Caco-2 (cell line): ENCODE measurements at regions of chr6 and their contacts with region 1.

Region 1: GRCh38 chr6:146857180-146857979 is 258.6 kb downstream of the ADGB start:
- DNase-seq: peak; percentile 52 to 79
- H3K4me3 ChIP-seq: no peak overlapping the region
- H3K4me3 Mint-ChIP-seq: peak overlapping the region; percentile 54
- H3K27ac Mint-ChIP-seq: no peak overlapping the region
- H3K4me1 ChIP-seq: no peaks in the 10 kb centered on the region
- H3K4me1 Mint-ChIP-seq: no peaks in the 10 kb centered on the region
- H3K27me3 ChIP-seq: no peaks in the 10 kb centered on the region; the same call in 1 of the 2 replicates
- H3K27me3 Mint-ChIP-seq: peaks cover 6% of the 10 kb centered on the region
- CTCF ChIP-seq: peak; percentile 96 to 97

Region 2: GRCh38 chr6:146876271-146877151 is 19.1 kb after region 1 on chr6:
- CTCF ChIA-PET with region 1: no interaction called
- POLR2A ChIA-PET with region 1: no interaction called
- intact Hi-C with region 1: no loop called
- DNase-seq: peak; percentile 29 to 37
- H3K4me3 ChIP-seq: no peak overlapping the region
- H3K4me3 Mint-ChIP-seq: no peak overlapping the region
- H3K27ac Mint-ChIP-seq: no peak overlapping the region
- H3K4me1 ChIP-seq: 0 out of 2 replicates have a peak, but pooled peaks cover 9% of the 10 kb centered on the region
- H3K4me1 Mint-ChIP-seq: peaks cover 16% of the 10 kb centered on the region
- H3K27me3 ChIP-seq: no peaks in the 10 kb centered on the region
- H3K27me3 Mint-ChIP-seq: no peaks in the 10 kb centered on the region
- CTCF ChIP-seq: no peak

Region 3: GRCh38 chr6:147222160-147222838 is 364.9 kb after region 1 on chr6:
- CTCF ChIA-PET with region 1: no interaction called
- POLR2A ChIA-PET with region 1: no interaction called
- intact Hi-C with region 1: loop called (anchors 1 kb)
- DNase-seq: peak in 1 of 2 experiments; percentile 29
- H3K4me3 ChIP-seq: no peak overlapping the region
- H3K4me3 Mint-ChIP-seq: no peak overlapping the region
- H3K27ac Mint-ChIP-seq: no peak overlapping the region
- H3K4me1 ChIP-seq: 0 out of 2 replicates have a peak, but pooled peaks cover 5% of the 10 kb centered on the region
- H3K4me1 Mint-ChIP-seq: peaks cover 8% of the 10 kb centered on the region
- H3K27me3 ChIP-seq: no peaks in the 10 kb centered on the region
- H3K27me3 Mint-ChIP-seq: no peaks in the 10 kb centered on the region
- CTCF ChIP-seq: peak; percentile 49 to 52

Region 4: DNA sequence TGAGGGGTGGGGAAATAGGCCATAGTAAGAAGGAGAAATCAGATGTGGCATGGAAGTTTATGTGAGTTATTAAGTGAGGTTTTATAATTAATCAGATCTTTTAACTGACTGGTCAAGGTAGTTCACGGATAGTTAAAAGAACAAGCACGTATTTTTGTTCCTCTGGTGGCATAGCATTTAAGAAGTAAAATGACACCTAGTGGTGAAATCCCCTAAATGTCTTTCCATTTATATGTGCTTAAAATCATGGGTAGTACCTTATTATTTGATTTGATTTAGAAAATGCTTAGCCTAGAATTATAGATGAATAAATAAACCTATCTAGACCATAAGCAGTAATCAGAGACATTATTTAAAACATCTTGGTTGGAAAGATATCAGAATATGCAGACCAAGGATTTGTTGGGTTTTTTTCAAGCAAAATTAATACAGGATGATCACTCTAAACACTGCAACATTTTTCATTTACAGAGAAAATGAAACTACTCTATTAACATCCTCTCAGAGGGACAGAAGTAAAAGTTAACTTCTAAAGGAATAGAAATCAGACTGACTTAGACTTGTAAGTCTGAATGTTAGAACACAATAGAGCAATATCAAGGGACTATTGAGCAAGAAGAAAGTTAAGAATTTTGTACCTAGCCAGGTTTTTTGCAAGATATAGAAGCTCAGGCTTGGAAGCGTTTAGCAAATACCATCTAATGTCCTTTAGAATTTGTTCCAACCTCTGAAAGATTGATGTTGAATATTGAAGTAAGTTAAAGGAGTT is 427.9 kb after region 1 on chr6:
- CTCF ChIA-PET with region 1: no interaction called
- POLR2A ChIA-PET with region 1: no interaction called
- intact Hi-C with region 1: loop called (anchors 1 kb)
- DNase-seq: no peak
- H3K4me3 ChIP-seq: no peak overlapping the region
- H3K4me3 Mint-ChIP-seq: no peak overlapping the region
- H3K27ac Mint-ChIP-seq: no peak overlapping the region
- H3K4me1 ChIP-seq: peaks cover 6% of the 10 kb centered on the region
- H3K4me1 Mint-ChIP-seq: peaks cover 6% of the 10 kb centered on the region
- H3K27me3 ChIP-seq: no peaks in the 10 kb centered on the region
- H3K27me3 Mint-ChIP-seq: no peaks in the 10 kb centered on the region
- CTCF ChIP-seq: peak; percentile 24 to 38

Region 5: DNA sequence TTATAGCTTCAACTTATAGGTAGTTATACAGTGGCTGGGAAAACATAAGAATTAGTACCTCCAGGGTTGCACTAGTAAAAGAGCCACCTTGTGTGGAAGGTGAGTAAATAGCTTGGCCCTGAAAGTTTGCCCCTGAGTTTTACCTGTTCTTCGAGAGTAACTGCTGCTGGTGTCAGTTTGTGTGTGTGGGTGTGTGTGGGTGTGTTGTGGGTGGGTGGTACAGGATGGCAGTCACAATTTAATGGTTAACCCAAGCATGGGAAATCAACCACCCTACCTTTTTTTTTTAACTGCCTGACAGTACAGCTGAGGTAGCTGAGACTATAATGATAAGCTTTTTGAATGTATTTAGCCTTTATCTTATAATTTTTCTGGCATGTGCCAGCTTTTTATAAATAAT is 484.1 kb after region 1 on chr6:
- CTCF ChIA-PET with region 1: no interaction called
- POLR2A ChIA-PET with region 1: no interaction called
- intact Hi-C with region 1: loop called (anchors 10 kb)
- DNase-seq: no peak
- H3K4me3 ChIP-seq: no peak overlapping the region
- H3K4me3 Mint-ChIP-seq: no peak overlapping the region
- H3K27ac Mint-ChIP-seq: no peak overlapping the region
- H3K4me1 ChIP-seq: no peaks in the 10 kb centered on the region
- H3K4me1 Mint-ChIP-seq: no peaks in the 10 kb centered on the region
- H3K27me3 ChIP-seq: no peaks in the 10 kb centered on the region
- H3K27me3 Mint-ChIP-seq: no peaks in the 10 kb centered on the region
- CTCF ChIP-seq: no peak